CD14-positive monocyte (primary cell): ENCODE measurements at regions of chr17 and their contacts with region 1.

Region 1: DNA sequence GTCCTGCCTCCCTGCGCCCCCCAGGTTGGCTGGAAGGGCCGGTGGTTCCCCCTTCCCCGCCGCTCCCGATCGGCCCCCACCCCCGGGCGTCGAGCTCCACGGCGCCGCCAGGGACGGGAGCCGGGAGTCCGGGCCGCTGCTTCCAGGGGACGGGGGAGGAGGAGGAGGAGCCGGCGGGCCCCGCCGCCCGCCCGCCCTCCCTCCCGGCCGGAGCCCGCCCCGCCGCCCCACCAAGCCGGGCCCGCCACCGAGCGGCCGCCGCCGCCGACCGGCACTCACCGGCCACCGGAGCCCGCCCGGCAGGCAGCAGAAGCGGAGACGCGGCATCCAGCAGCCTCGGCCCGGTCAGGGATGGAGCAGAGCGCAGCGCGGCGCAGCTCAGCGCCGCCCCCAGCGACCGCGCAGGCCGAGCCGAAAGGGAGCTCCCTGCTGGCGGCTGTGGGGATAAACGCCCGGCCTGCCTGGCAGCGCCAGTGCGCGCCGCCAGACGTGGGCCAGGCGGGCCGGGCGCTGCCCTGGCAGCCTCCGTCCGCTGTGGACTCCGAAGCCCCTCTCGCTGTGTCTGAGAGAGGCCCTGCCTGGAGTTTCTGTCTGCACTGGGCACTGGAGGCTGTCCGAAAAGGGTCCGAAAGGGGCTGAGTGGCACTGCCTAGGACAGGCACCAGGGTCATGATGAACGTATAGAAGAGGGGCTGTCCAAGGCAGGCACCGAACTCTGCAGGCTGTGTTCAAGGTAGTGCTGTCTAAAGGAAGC is at the start of gene MYO18A:
- DNase-seq: peak; percentile 72 to 79 (median 78)
- H3K4me3 ChIP-seq: peak within 1 kb of the TSS; percentile 13 to 69 (median 32)
- H3K4me3 Mint-ChIP-seq: peak within 1 kb of the TSS; percentile 57 to 67
- H3K27ac ChIP-seq: peak within 1 kb of the TSS in 1 of 2 donors; percentile 22
- H3K27ac Mint-ChIP-seq: peak within 1 kb of the TSS in 5 of 7 donors; percentile 13 to 66 (median 37)
- H3K4me1 ChIP-seq: peaks cover 32 to 40% of the 10 kb centered on the region in 2 donors
- H3K4me1 Mint-ChIP-seq: peaks cover 44% of the 10 kb centered on the region
- H3K27me3 ChIP-seq: peaks cover 0 to 15% of the 10 kb centered on the region in 2 donors
- H3K27me3 Mint-ChIP-seq: peaks cover 4 to 25% (median 23%) of the 10 kb centered on the region in 3 donors
- CTCF ChIP-seq: peak; percentile 85
- polyA plus RNA-seq, gene MYO18A: 6.3 to 40.2 (median 11.0) TPM

Region 2: DNA sequence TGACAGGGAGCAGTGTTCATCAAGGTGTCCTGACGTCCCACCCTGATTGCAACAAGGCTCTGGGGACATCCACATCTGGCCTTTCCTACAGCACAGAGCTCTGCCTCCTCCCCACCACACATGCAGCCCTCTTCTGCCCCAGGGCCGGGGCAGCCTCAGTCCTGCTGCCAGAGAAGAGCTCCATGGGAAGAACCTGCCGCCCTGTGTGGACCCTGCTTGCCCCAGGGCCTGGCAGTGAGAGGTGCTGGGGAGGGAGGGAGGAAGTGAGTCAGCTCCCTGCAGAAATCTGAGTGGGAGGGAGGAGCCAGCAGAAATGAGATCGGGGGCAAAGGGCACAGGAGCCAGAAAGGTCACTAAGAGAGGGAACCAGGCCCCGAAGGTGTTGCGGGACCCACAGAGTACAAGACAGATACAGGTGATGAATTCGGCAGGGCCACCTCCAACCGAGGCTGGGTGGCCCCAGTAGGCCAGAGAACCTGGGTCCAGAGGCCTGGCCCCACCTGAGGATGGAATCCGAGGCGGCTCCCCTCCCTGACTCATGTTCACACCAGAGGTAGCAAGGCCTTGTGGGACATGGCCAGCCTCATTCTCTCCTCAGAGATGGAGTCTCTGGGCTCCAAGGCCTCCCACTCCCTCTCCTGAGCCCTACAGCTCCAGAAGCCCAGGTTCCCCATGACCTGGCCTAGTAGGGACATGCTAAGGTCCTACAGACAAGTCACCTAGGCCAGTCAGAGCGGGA is 24.8 kb before region 1 on chr17:
- intact Hi-C with region 1: loop called in 1 of 2 experiments (anchors 2 kb)
- DNase-seq: peak; percentile 70 to 82 (median 74)
- H3K4me3 ChIP-seq: peak overlapping the region in 1 of 3 experiments; percentile 64
- H3K4me3 Mint-ChIP-seq: peak overlapping the region; percentile 64 to 83
- H3K27ac ChIP-seq: peak overlapping the region; percentile 59 to 73
- H3K27ac Mint-ChIP-seq: peak overlapping the region; percentile 84 to 94 (median 90)
- H3K4me1 ChIP-seq: peaks cover 38 to 50% of the 10 kb centered on the region in 2 donors
- H3K4me1 Mint-ChIP-seq: peaks cover 53% of the 10 kb centered on the region
- H3K27me3 ChIP-seq: no peaks in the 10 kb centered on the region
- H3K27me3 Mint-ChIP-seq: peaks cover 0 to 3% (median 0%) of the 10 kb centered on the region in 3 donors
- CTCF ChIP-seq: no peak

Region 3: DNA sequence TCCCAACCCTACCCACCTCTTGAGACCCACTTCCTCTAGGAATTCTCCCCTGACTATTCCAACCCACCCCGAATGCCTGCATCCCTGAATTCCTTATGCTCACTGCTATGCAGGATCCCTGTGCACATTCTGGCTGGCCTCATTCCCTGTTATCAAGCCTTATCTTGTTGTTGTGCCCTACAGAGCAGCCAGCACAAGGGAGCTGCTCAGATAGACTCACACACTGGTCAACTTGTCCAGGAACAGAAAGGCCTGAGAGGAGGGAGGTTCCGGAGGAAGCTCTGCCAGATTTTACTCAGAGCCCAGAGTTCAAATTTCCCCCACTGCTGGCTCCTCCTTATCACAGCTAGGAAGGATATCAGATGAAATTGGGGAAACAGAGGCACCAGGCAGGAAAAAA is 24.8 kb after region 1 on chr17:
- intact Hi-C with region 1: no loop called
- DNase-seq: no peak
- H3K4me3 ChIP-seq: no peak overlapping the region
- H3K4me3 Mint-ChIP-seq: no peak overlapping the region
- H3K27ac ChIP-seq: no peak overlapping the region
- H3K27ac Mint-ChIP-seq: no peak overlapping the region
- H3K4me1 ChIP-seq: peaks cover 6% of the 10 kb centered on the region in 2 donors
- H3K4me1 Mint-ChIP-seq: peaks cover 16% of the 10 kb centered on the region
- H3K27me3 ChIP-seq: no peaks in the 10 kb centered on the region
- H3K27me3 Mint-ChIP-seq: peaks cover 1 to 5% (median 2%) of the 10 kb centered on the region in 3 donors
- CTCF ChIP-seq: no peak